CD8-positive, alpha-beta T cell (primary cell): ENCODE measurements at regions of chr2 and their contacts with region 1.

Region 1: DNA sequence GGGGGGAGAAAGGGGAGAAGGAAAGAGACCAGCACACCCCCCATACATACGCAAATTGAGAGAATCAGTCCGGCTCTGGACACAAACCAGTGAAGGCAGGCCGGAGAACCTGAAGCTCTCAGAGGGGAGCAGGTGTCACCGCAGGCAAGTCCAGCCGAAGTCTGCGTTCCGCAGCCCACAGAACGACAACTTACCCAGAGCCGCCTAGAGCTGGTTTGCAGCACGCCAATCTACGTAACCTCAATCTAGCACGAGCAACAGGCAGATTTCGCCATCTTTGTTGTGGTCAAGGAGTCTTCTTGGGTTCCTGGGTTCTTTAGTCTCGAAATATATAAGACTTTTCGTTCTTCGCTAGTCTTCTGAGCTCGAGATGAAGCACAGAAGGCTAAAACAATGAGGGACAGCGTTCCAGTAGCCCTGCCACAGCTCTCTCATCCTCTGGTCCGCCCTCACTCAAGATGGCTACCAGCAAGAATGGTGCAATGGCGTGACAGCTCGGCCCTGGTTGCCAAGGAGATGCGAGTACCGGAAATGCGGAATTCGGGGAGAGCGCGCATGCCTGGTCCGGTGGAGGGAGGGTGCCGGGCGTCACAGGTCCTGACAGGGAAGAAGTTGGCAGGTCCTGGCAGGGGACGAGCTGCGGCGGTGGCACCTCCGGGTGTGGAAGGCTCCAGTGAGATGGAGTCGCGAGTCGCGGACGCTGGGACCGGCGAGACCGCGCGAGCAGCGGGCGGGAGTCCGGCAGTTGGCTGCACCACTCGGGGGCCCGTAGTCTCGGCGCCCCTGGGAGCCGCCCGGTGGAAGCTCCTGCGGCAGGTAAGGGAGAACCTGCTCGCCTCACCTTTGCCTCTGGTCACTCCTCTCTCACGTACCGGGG is at the starts of genes CAMKMT and PREPL:
- DNase-seq: peak; percentile 97 to 99 (median 98)
- ATAC-seq: peak; percentile 88
- H3K4me3 ChIP-seq: peak within 1 kb of the TSS; percentile 74 to 81
- H3K4me3 Mint-ChIP-seq: peak within 1 kb of the TSS; percentile 98
- H3K27ac ChIP-seq: peak within 1 kb of the TSS; percentile 93 to 98
- H3K27ac Mint-ChIP-seq: peak within 1 kb of the TSS; percentile 100
- H3K4me1 ChIP-seq: peaks cover 24% of the 10 kb centered on the region
- H3K4me1 Mint-ChIP-seq: peaks cover 61% of the 10 kb centered on the region
- H3K27me3 ChIP-seq: no peaks in the 10 kb centered on the region
- H3K27me3 Mint-ChIP-seq: no peaks in the 10 kb centered on the region
- CTCF ChIP-seq: no peak
- total RNA-seq, gene CAMKMT: 12.4 to 13.0 TPM
- total RNA-seq, gene PREPL: 26.6 to 27.9 TPM

Region 2: DNA sequence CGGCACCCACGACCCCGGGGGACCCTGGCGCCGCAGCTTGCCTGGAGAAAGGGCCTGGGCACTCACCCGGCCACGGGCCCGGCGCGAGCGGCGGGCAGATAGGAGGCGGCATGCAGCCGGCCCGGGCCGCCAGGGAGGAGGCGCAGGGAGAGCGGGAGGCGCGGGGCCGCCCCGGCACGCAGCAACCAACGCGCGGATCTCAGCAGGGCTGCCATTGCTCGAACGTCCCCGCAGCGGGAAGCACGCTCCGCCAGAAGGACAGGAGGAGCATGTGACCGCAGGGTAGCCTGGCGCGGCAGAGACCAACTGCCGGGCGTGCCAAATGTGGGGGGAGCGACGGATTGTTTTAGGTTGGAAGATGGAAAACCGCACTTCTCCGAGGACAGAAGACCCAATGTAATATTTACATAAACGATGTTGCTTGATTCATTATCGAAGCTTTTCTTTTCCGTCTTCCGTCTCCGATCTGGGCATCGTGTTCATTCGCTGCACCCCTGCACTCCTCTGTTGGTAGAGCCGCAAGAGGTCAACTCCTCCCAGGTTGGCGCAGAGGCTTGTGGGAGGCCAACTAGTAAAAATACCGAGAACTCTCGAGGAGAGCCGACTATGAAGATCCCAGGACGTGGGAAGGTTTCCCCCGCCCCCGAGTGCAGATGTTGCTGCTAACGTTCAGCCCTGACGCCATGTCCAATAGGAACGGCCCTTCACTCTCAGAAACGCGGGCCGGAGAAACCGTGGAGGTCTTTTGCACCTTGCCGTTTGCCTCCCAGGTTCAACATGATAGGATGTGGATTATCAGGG is 365.6 kb before region 1 on chr2 and contains the start of gene LRPPRC:
- CTCF ChIA-PET with region 1: interaction called, 3 read pairs
- POLR2A ChIA-PET with region 1: no interaction called
- intact Hi-C with region 1: loop called (anchors 1 kb)
- DNase-seq: peak; percentile 77 to 96 (median 90)
- ATAC-seq: peak; percentile 96
- H3K4me3 ChIP-seq: peak within 1 kb of the TSS; percentile 78 to 94
- H3K4me3 Mint-ChIP-seq: peak within 1 kb of the TSS; percentile 91
- H3K27ac ChIP-seq: peak within 1 kb of the TSS; percentile 65 to 91
- H3K27ac Mint-ChIP-seq: peak within 1 kb of the TSS; percentile 96
- H3K4me1 ChIP-seq: peaks cover 36% of the 10 kb centered on the region
- H3K4me1 Mint-ChIP-seq: peaks cover 51% of the 10 kb centered on the region
- H3K27me3 ChIP-seq: no peaks in the 10 kb centered on the region
- H3K27me3 Mint-ChIP-seq: peaks cover 2% of the 10 kb centered on the region
- CTCF ChIP-seq: no peak
- total RNA-seq, gene LRPPRC: 62.8 to 67.2 TPM

Region 3: DNA sequence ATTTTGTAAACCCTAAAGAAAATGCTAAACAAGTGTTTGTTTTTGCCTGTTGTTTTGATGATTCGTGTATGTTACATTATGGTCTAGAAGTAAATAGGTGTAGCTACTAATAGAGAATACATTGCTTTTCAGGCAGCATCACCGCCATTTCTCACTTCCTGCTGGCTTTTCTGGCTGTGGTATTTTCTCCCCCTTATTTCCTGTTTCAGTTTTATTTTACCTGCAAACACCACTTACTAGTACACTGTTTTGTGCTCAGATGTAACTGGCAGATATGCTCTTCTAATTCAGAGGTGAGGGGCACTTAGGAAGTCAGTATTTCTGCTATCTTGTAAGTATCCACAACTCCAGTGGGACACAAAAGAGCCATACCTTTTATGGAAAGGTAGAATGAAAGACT is 124.3 kb before region 1 on chr2:
- CTCF ChIA-PET with region 1: interaction called, 3 read pairs
- POLR2A ChIA-PET with region 1: interaction called, 4 read pairs
- intact Hi-C with region 1: loop called in 1 of 2 experiments (anchors 5 kb)
- DNase-seq: peak in 8 of 9 experiments; percentile 17 to 76 (median 30)
- ATAC-seq: peak; percentile 84
- H3K4me3 ChIP-seq: peak overlapping the region; percentile 17 to 30
- H3K4me3 Mint-ChIP-seq: peak overlapping the region; percentile 71
- H3K27ac ChIP-seq: peak overlapping the region; percentile 7 to 64
- H3K27ac Mint-ChIP-seq: peak overlapping the region; percentile 53
- H3K4me1 ChIP-seq: peaks cover 31% of the 10 kb centered on the region
- H3K4me1 Mint-ChIP-seq: peaks cover 34% of the 10 kb centered on the region
- H3K27me3 ChIP-seq: no peaks in the 10 kb centered on the region
- H3K27me3 Mint-ChIP-seq: no peaks in the 10 kb centered on the region
- CTCF ChIP-seq: no peak

Region 4: GRCh38 chr2:44392338-44392943 is 30.9 kb after region 1 on chr2:
- CTCF ChIA-PET with region 1: interaction called, 8 read pairs
- POLR2A ChIA-PET with region 1: interaction called, 5 read pairs
- intact Hi-C with region 1: loop called in 1 of 2 experiments (anchors 1 kb)
- DNase-seq: peak in 8 of 9 experiments; percentile 11 to 60 (median 52)
- ATAC-seq: no peak
- H3K4me3 ChIP-seq: no peak overlapping the region
- H3K4me3 Mint-ChIP-seq: no peak overlapping the region
- H3K27ac ChIP-seq: no peak overlapping the region
- H3K27ac Mint-ChIP-seq: no peak overlapping the region
- H3K4me1 ChIP-seq: no peaks in the 10 kb centered on the region
- H3K4me1 Mint-ChIP-seq: peaks cover 6% of the 10 kb centered on the region
- H3K27me3 ChIP-seq: no peaks in the 10 kb centered on the region
- H3K27me3 Mint-ChIP-seq: no peaks in the 10 kb centered on the region
- CTCF ChIP-seq: peak; percentile 77

Region 5: GRCh38 chr2:44537264-44537663 is 175.7 kb after region 1 on chr2:
- CTCF ChIA-PET with region 1: no interaction called
- POLR2A ChIA-PET with region 1: no interaction called
- intact Hi-C with region 1: no loop called
- DNase-seq: no peak
- ATAC-seq: no peak
- H3K4me3 ChIP-seq: no peak overlapping the region
- H3K4me3 Mint-ChIP-seq: no peak overlapping the region
- H3K27ac ChIP-seq: no peak overlapping the region
- H3K27ac Mint-ChIP-seq: no peak overlapping the region
- H3K4me1 ChIP-seq: no peaks in the 10 kb centered on the region
- H3K4me1 Mint-ChIP-seq: no peaks in the 10 kb centered on the region
- H3K27me3 ChIP-seq: no peaks in the 10 kb centered on the region
- H3K27me3 Mint-ChIP-seq: no peaks in the 10 kb centered on the region
- CTCF ChIP-seq: no peak